ENCODE measurements at regions of chr2 and their contacts with region 1.

Region 1: DNA sequence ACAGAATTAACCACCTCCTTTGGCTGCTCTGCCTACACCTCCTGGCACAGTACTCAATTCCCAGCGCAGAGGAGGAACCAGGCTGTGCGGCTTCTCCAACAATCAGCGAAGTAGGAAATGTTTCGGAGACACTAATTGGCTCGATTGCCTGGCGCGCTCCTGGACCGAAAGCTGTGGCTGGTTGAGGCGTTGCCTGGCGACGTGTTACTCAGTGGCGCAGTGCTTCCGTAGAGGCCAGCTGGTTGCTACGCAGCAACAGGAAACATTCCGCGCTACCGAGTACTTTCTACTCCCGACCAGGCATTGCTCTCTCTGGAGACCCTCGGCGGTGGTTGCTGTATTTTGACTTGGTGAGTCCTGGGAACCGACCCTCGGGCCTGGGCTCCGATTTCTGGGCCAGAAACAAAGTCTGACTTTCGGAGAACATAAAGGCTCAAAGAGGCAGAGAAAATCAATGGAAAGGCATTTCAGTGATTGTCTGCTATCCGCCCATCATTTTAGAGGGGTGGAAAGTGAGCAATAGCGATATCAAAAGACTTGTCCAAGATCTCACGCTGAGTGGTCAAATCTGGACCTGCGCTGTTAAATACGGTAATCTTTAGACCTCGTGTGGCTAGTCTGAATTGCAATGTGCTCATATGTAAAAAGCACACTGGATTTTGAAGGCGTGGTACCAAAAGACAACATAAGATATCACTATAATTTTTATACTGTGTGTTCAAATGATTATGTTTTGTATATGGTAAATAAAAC is at the start of gene DNAH6:
- DNase-seq: peak; percentile 92
- ATAC-seq: peak; percentile 100
- H3K4me3 Mint-ChIP-seq: peak within 1 kb of the TSS; percentile 79
- H3K27ac Mint-ChIP-seq: no peak within 1 kb of the TSS
- H3K4me1 Mint-ChIP-seq: peaks cover 20% of the 10 kb centered on the region
- H3K27me3 Mint-ChIP-seq: no peaks in the 10 kb centered on the region
- CTCF ChIP-seq: no peak
- total RNA-seq, gene DNAH6: 0.90 to 1.3 TPM

Region 2: GRCh38 chr2:84526562-84526961 is 10.2 kb after region 1 on chr2:
- CTCF ChIA-PET with region 1: interaction called, 12 read pairs
- POLR2A ChIA-PET with region 1: interaction called, 3 read pairs
- intact Hi-C with region 1: no loop called
- DNase-seq: no peak
- ATAC-seq: no peak
- H3K4me3 Mint-ChIP-seq: no peak overlapping the region
- H3K27ac Mint-ChIP-seq: peak overlapping the region; percentile 8
- H3K4me1 Mint-ChIP-seq: peaks cover 19% of the 10 kb centered on the region
- H3K27me3 Mint-ChIP-seq: no peaks in the 10 kb centered on the region
- CTCF ChIP-seq: no peak

Measured in activated CD8-positive, alpha-beta T cell treated with anti-CD3 and anti-CD28 coated beads for 36 hours (primary cell).